B cell (primary cell): ENCODE measurements at regions of chr18 and their contacts with region 1.

Region 1: GRCh38 chr18:28855524-28855923 is 678.6 kb upstream of the CDH2 start:
- DNase-seq: no peak
- ATAC-seq: no peak
- H3K4me3 ChIP-seq: no peak overlapping the region
- H3K4me3 Mint-ChIP-seq: no peak overlapping the region
- H3K27ac ChIP-seq: no peak overlapping the region
- H3K27ac Mint-ChIP-seq: no peak overlapping the region
- H3K4me1 ChIP-seq: no peaks in the 10 kb centered on the region
- H3K4me1 Mint-ChIP-seq: no peaks in the 10 kb centered on the region
- H3K27me3 ChIP-seq: no peaks in the 10 kb centered on the region
- H3K27me3 Mint-ChIP-seq: no peaks in the 10 kb centered on the region
- CTCF ChIP-seq: no peak

Region 2: GRCh38 chr18:28705482-28705881 is 150.0 kb before region 1 on chr18:
- CTCF ChIA-PET with region 1: no interaction called
- POLR2A ChIA-PET with region 1: no interaction called
- intact Hi-C with region 1: no loop called
- DNase-seq: no peak
- ATAC-seq: no peak
- H3K4me3 ChIP-seq: no peak overlapping the region
- H3K4me3 Mint-ChIP-seq: no peak overlapping the region
- H3K27ac ChIP-seq: no peak overlapping the region
- H3K27ac Mint-ChIP-seq: no peak overlapping the region
- H3K4me1 ChIP-seq: no peaks in the 10 kb centered on the region
- H3K4me1 Mint-ChIP-seq: no peaks in the 10 kb centered on the region
- H3K27me3 ChIP-seq: no peaks in the 10 kb centered on the region
- H3K27me3 Mint-ChIP-seq: no peaks in the 10 kb centered on the region
- CTCF ChIP-seq: no peak

Region 3: GRCh38 chr18:28834889-28835288 is 20.6 kb before region 1 on chr18:
- CTCF ChIA-PET with region 1: no interaction called
- POLR2A ChIA-PET with region 1: no interaction called
- intact Hi-C with region 1: no loop called
- DNase-seq: no peak
- ATAC-seq: no peak
- H3K4me3 ChIP-seq: no peak overlapping the region
- H3K4me3 Mint-ChIP-seq: no peak overlapping the region
- H3K27ac ChIP-seq: no peak overlapping the region
- H3K27ac Mint-ChIP-seq: no peak overlapping the region
- H3K4me1 ChIP-seq: no peaks in the 10 kb centered on the region
- H3K4me1 Mint-ChIP-seq: no peaks in the 10 kb centered on the region
- H3K27me3 ChIP-seq: no peaks in the 10 kb centered on the region
- H3K27me3 Mint-ChIP-seq: no peaks in the 10 kb centered on the region
- CTCF ChIP-seq: no peak

Region 4: GRCh38 chr18:28916456-28916855 is 60.9 kb after region 1 on chr18:
- CTCF ChIA-PET with region 1: no interaction called
- POLR2A ChIA-PET with region 1: no interaction called
- intact Hi-C with region 1: loop called (anchors 10 kb)
- DNase-seq: no peak
- ATAC-seq: no peak
- H3K4me3 ChIP-seq: no peak overlapping the region
- H3K4me3 Mint-ChIP-seq: no peak overlapping the region
- H3K27ac ChIP-seq: no peak overlapping the region
- H3K27ac Mint-ChIP-seq: no peak overlapping the region
- H3K4me1 ChIP-seq: no peaks in the 10 kb centered on the region
- H3K4me1 Mint-ChIP-seq: no peaks in the 10 kb centered on the region
- H3K27me3 ChIP-seq: no peaks in the 10 kb centered on the region
- H3K27me3 Mint-ChIP-seq: no peaks in the 10 kb centered on the region
- CTCF ChIP-seq: no peak